ENCODE measurements at regions of chr17 and their contacts with region 1.

Region 1: DNA sequence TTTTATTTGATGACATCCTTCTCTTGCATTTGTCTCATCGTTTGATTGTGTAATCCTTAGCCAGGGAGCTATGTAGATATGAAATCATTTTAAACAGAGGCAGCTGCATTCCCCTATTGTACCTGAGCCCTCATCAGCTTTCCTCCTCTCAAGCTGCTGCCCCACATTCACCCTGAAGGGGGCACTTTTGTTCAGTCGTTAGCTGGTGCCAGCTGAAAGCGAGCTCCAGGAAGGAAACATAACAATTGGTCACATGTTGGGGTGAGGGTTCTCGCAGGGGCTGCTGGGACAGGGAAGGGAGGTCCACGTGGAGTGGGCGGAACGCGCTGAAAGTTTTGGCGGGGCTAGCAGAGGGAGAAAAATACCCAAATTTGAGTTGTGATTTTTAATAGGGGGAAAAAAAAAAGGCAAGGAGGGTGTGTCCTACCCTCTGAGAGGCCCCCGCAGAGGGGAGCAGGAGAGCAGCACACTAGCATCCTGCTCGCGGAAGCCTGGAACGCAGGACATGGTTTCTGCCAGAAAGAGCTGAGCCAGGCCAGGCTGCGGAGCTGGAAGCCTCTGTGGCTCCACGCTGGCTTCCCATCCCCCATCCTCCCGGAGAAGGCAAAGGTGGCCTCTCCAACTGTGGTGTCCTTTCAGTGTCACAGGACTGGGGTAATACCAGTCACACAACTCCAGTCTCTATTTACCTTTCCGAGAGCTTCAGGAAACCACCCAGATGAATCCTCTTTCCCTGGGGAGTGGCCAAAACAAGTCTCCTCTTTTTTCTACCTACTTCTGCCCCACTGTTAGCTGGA is 8.5 kb upstream of the MSL1 start:
- DNase-seq: peak in 1 of 2 experiments; percentile 92
- H3K4me3 ChIP-seq: peak overlapping the region; percentile 1 to 53 (median 11); a peak in 5 of 8 replicates
- H3K27ac ChIP-seq: peak overlapping the region; percentile 93
- H3K4me1 ChIP-seq: peaks cover 23 to 33% (median 31%) of the 10 kb centered on the region in 4 experiments
- H3K27me3 ChIP-seq: no peaks in the 10 kb centered on the region; a peak in 2 of 7 replicates
- CTCF ChIP-seq: peak; percentile 73 to 90 (median 78)
- EP300 ChIP-seq: peak in 1 of 2 experiments; percentile 4; a peak in 1 of 3 replicates
- POLR2A ChIP-seq: peak in 1 of 2 experiments; percentile 86; a peak in 2 of 3 replicates
- RAD21 ChIP-seq: peak; percentile 80 to 84

Region 2: GRCh38 chr17:39965017-39965699 is 148.2 kb before region 1 on chr17:
- CTCF ChIA-PET with region 1: no interaction called
- POLR2A ChIA-PET with region 1: no interaction called
- DNase-seq: no peak
- H3K4me3 ChIP-seq: no peak overlapping the region
- H3K27ac ChIP-seq: no peak overlapping the region
- H3K4me1 ChIP-seq: no peaks in the 10 kb centered on the region; a peak in 1 of 7 replicates
- H3K27me3 ChIP-seq: no peaks in the 10 kb centered on the region; a peak in 2 of 7 replicates
- CTCF ChIP-seq: no peak
- EP300 ChIP-seq: no peak
- POLR2A ChIP-seq: no peak
- RAD21 ChIP-seq: no peak

Region 3: DNA sequence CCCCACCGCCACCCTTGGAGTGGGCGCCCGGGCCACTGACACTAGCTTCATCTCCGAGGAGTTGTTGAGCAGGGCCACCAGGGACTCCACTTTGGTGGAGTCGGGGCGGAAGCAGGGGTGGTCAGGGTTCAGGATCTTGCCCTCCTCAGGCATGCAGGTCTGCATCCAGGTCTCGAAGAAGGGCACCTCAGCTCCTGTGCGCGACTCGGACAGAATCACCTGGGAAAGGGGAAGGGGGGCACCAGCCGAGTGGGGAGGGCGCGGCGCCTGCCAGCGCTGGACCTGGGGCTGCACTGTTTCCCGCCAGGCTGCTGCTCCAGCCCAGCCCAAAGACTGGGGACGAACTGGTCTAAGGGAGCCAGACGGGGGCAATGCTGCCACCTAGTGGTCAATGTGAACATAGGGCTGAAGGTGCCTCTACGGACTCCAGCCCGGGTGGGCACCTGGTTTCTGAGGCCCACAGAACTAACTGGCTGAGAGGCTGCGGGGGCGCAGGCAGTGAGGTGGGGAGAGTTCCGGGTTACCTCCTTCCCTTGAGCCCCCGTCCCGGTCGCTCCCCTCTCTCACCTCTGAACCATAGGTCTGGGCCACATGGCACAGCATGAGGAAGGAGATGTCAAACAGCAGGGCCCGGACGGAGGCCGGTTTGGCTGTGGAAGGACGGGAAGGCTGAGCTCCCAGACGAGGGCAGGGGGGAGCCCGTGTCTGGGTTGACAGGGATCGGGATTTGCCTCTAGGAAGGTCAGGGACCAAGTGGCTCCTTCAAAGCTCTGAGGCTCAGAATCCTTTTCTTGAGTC is 86.3 kb before region 1 on chr17:
- CTCF ChIA-PET with region 1: interaction called, 128 read pairs
- POLR2A ChIA-PET with region 1: interaction called, 3 read pairs
- DNase-seq: peak; percentile 68 to 90
- H3K4me3 ChIP-seq: no peak overlapping the region
- H3K27ac ChIP-seq: no peak overlapping the region
- H3K4me1 ChIP-seq: no peaks in the 10 kb centered on the region
- H3K27me3 ChIP-seq: no peaks in the 10 kb centered on the region
- CTCF ChIP-seq: peak; percentile 91 to 97 (median 96)
- EP300 ChIP-seq: no peak
- POLR2A ChIP-seq: no peak
- RAD21 ChIP-seq: peak; percentile 80 to 86

Region 4: DNA sequence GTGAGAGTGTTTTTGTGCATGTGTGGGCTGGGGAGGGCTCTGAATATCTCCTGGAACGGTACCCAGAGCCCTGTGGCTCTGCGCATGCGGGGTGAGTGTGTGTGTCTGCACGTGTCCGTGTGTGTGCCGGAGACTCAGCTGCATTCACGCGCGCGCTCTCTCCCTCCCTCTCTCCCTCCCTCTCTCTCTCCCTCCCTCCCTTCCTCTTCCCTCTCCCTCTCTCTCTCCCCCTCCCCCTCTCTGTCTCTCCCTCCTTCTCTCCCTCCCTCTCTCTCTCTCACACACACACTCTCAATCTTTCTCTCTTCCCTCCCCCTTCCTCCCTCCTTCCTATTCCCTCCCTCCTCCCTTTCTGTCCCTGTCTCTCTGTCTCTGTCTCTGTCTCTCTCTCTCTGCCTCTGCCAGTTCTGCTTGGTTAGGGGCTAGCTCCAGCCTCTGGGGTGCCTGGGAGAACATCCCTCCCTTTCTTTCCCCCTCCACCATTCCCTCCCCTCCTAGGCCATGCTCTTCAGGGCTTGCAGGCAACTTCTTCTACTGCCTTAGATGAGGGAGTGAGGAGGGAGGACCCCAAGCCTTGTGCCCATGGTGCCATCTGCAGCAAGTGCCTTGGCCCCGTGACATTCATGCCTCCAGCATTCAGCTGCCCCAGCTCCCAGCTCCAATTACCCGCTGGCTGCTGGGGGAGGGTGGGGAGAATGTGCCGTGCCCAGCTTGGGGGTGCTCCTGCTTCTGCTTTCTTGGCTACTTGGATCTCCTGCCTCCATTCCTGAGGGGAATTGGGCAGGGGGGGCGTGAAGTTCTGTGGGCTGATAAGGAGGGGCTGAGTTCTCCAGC is 44.2 kb before region 1 on chr17:
- CTCF ChIA-PET with region 1: interaction called, 87 read pairs
- POLR2A ChIA-PET with region 1: interaction called, 4 read pairs
- DNase-seq: peak in 1 of 2 experiments; percentile 65
- H3K4me3 ChIP-seq: peak overlapping the region in 2 of 4 experiments; percentile 2 to 39; a peak in 2 of 8 replicates
- H3K27ac ChIP-seq: no peak overlapping the region
- H3K4me1 ChIP-seq: peaks cover 32 to 60% (median 50%) of the 10 kb centered on the region in 4 experiments
- H3K27me3 ChIP-seq: peaks cover 0 to 7% (median 5%) of the 10 kb centered on the region in 4 experiments; a peak in 6 of 7 replicates
- CTCF ChIP-seq: no peak
- EP300 ChIP-seq: no peak
- POLR2A ChIP-seq: no peak
- RAD21 ChIP-seq: no peak

Region 5: GRCh38 chr17:40086150-40087044 is 26.9 kb before region 1 on chr17:
- CTCF ChIA-PET with region 1: interaction called, 85 read pairs
- POLR2A ChIA-PET with region 1: interaction called, 399 read pairs
- DNase-seq: peak in 1 of 2 experiments; percentile 94
- H3K4me3 ChIP-seq: no peak overlapping the region
- H3K27ac ChIP-seq: no peak overlapping the region
- H3K4me1 ChIP-seq: peaks cover 0 to 14% (median 0%) of the 10 kb centered on the region in 4 experiments; a peak in 1 of 7 replicates
- H3K27me3 ChIP-seq: no peaks in the 10 kb centered on the region
- CTCF ChIP-seq: peak; percentile 89 to 96 (median 89)
- EP300 ChIP-seq: no peak
- POLR2A ChIP-seq: no peak
- RAD21 ChIP-seq: peak; percentile 95 to 98

Region 6: GRCh38 chr17:40139566-40140058 is 26.3 kb after region 1 on chr17:
- CTCF ChIA-PET with region 1: interaction called, 135 read pairs
- POLR2A ChIA-PET with region 1: interaction called, 90 read pairs
- DNase-seq: no peak
- H3K4me3 ChIP-seq: peak overlapping the region; percentile 51 to 88 (median 68)
- H3K27ac ChIP-seq: peak overlapping the region; percentile 84
- H3K4me1 ChIP-seq: peaks cover 0 to 4% (median 1%) of the 10 kb centered on the region in 4 experiments; a peak in 2 of 7 replicates
- H3K27me3 ChIP-seq: no peaks in the 10 kb centered on the region
- CTCF ChIP-seq: no peak
- EP300 ChIP-seq: no peak
- POLR2A ChIP-seq: no peak
- RAD21 ChIP-seq: no peak

Region 7: DNA sequence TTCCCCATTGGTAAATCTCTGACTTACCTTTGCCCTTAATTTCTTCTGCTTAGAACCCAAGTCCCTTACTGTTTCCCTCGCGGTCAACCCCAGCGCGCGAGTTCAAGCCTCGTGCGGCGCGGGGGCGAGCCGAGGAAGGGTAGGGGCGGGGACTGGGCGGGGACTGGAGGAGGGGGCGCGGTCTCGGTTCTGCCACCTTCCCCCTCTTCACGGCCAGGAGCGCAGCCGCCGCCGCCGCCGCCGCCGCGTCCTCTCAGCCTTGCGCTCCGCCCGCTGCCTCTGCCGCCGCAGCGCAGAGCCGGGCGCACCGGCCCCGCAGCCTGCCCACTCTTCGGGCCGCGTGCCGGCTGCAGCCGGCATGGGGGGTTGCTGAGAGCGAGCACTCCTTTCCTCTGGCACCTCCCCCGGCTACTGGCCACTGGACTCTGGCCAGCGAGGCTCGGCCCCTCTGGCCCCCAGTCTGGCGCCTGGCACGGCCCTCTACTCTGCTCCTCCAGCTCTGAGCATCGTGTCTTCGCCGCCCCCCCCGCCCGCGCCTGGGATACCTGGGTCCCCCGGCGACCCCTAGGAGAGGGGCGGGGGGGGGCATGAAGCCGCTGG is 64.1 kb after region 1 on chr17 and contains the start of gene RAPGEFL1:
- CTCF ChIA-PET with region 1: interaction called, 13 read pairs
- POLR2A ChIA-PET with region 1: interaction called, 10 read pairs
- DNase-seq: peak in 1 of 2 experiments; percentile 86
- H3K4me3 ChIP-seq: peak within 1 kb of the TSS; percentile 39 to 80 (median 46)
- H3K27ac ChIP-seq: no peak within 1 kb of the TSS
- H3K4me1 ChIP-seq: peaks cover 5 to 20% (median 15%) of the 10 kb centered on the region in 4 experiments; a peak in 6 of 7 replicates
- H3K27me3 ChIP-seq: no peaks in the 10 kb centered on the region
- CTCF ChIP-seq: no peak
- EP300 ChIP-seq: peak in 1 of 2 experiments; percentile 63; a peak in 1 of 3 replicates
- POLR2A ChIP-seq: peak in 1 of 2 experiments; percentile 23; a peak in 2 of 3 replicates
- RAD21 ChIP-seq: no peak
- total RNA-seq, gene RAPGEFL1: 18.1 and 20.2 TPM in 2 replicates

Region 8: GRCh38 chr17:40219073-40219860 is 106.0 kb after region 1 on chr17 and contains the start of gene WIPF2:
- CTCF ChIA-PET with region 1: interaction called, 10 read pairs
- POLR2A ChIA-PET with region 1: interaction called, 7 read pairs
- DNase-seq: peak; percentile 91 to 98
- H3K4me3 ChIP-seq: peak within 1 kb of the TSS; percentile 79 to 100 (median 86)
- H3K27ac ChIP-seq: peak within 1 kb of the TSS; percentile 87
- H3K4me1 ChIP-seq: 0 out of 7 replicates have a peak, but pooled peaks cover 0 to 3% (median 1%) of the 10 kb centered on the region in 4 experiments
- H3K27me3 ChIP-seq: no peaks in the 10 kb centered on the region
- CTCF ChIP-seq: peak; percentile 55 to 81 (median 69)
- EP300 ChIP-seq: peak in 1 of 2 experiments; percentile 7; a peak in 2 of 3 replicates
- POLR2A ChIP-seq: peak in 1 of 2 experiments; percentile 77; a peak in 2 of 3 replicates
- RAD21 ChIP-seq: peak; percentile 2 to 26; a peak in 2 of 4 replicates
- total RNA-seq, gene WIPF2: 21.1 and 25.3 TPM in 2 replicates

Measured in H1 (cell line).